ENCODE measurements at regions of chrX and their contacts with region 1.

Region 1: GRCh38 chrX:18146954-18147353 is 73.7 kb downstream of the BEND2 start:
- DNase-seq: no peak
- ATAC-seq: no peak

Region 2: DNA sequence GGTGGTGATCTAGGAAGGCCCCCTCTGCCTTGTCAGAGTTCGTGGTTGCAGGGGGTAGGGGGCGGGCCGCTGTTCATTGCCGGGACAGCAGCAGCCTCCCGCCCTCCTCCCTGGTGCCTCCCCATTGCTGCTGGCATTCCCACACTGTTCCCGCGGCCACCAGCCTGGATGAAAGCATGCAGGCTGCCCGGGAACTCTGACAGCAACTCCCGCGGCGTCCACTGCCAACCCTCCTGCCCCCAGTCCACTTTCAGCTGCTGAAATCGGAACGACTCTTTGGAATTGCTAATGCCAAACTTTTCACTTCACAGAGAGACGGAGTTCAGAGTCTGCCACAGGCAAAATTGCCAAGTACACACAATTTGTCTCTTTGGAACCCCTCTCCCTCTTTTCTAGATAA is 48.2 kb before region 1 on chrX:
- intact Hi-C with region 1: loop called (anchors 5 kb)
- DNase-seq: peak; percentile 68
- ATAC-seq: peak; percentile 54

Region 3: DNA sequence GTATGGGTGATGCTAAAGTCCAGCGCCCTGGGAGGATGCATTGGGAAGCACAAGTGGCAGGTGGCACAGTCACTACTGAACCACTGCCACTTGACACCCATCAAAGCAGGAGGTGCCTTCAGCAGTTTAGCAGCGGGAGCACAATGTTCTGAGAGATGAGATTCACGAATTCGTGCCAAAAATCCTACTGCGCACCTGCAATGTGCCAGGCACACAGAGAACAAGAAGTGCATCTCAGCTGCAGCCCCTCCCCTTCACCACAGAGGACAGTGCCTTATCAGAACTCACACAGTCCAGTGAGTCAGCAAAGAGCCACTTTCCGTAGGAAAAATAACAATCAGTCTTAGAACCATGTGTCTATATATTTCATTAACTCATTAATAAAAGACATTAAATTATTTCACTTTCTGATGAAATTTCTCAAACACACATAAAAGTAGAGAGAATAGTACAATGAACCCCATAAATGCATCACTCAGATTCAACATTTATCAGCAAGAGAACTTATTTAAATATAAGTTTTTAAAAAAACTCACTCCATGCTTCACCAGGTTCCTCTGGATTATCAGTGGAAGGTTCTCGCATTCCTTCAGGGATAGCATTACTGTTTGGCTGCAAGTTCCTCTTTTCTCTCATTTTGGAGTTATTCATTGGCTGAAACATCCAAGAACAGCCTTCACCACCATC is 26.7 kb after region 1 on chrX:
- intact Hi-C with region 1: loop called (anchors 2 kb)
- DNase-seq: peak; percentile 44
- ATAC-seq: peak; percentile 96

Measured in Right ventricle myocardium inferior (tissue), 1 donor.